Mammary epithelial cell (primary cell): ENCODE measurements at regions of chr1 and their contacts with region 1.

Region 1: DNA sequence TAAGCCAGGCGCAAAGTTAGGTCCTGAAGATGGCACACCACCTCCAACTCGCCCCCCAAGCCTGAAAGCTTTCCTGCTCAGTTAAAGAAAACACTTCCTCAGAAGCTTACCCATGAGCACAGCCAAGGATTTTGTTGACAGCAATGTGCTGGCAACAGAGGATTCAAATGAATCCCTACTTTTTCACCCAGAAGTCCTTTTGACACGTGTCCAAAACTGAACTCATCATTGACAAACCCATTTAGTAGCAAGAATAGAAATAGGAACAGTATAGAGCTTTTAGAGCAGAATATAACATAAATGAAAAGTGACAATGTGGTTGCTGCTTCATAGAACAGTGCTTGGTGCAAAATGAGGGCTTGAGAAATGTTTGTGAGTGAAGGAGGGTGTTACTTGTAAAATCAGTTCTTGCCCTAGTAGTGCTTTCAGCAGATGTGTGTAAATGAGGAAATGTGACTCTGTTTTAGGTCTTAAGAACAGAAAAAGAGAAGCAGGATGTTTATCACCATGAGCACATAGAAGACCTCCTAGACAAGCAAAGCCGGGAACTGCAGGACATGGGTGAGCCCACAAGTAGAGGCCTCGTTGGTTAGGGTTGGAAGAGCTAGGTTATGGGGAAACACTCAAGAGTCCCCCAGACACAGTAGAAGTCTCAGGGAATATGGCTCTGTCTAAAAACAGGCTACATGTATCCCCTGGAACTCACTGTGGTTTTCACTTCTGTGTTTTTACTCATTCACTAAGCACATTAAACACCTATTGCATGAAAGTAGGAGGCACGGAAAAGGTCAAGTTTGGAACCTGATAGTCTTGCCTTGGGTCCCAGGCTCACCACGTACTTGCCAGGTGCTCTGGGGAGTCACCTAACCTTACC is 48.6 kb upstream of the TMEM125 start:
- DNase-seq: no peak
- H3K4me3 ChIP-seq: no peak overlapping the region
- H3K27ac ChIP-seq: no peak overlapping the region
- H3K4me1 ChIP-seq: no peaks in the 10 kb centered on the region
- H3K27me3 ChIP-seq: no peaks in the 10 kb centered on the region
- CTCF ChIP-seq: no peak

Region 2: GRCh38 chr1:43267291-43267805 is 46.2 kb after region 1 on chr1:
- CTCF ChIA-PET with region 1: no interaction called
- dilution Hi-C with region 1: loop called (anchors 5 kb)
- in situ Hi-C with region 1: no loop called
- intact Hi-C with region 1: no loop called
- DNase-seq: no peak
- H3K4me3 ChIP-seq: no peak overlapping the region
- H3K27ac ChIP-seq: no peak overlapping the region
- H3K4me1 ChIP-seq: peaks cover 14% of the 10 kb centered on the region
- H3K27me3 ChIP-seq: no peaks in the 10 kb centered on the region
- CTCF ChIP-seq: no peak